AG04450 (cell line): ENCODE measurements at regions of chr7 and their contacts with region 1.

Region 1: GRCh38 chr7:32957326-32958045 is at the start of gene FKBP9:
- DNase-seq: no peak
- H3K4me3 ChIP-seq: peak within 1 kb of the TSS; percentile 88
- H3K27ac ChIP-seq: peak within 1 kb of the TSS; percentile 77
- H3K27me3 ChIP-seq: no peaks in the 10 kb centered on the region
- CTCF ChIP-seq: no peak
- polyA plus RNA-seq, gene FKBP9: 177 and 204 TPM in 2 replicates

Region 2: DNA sequence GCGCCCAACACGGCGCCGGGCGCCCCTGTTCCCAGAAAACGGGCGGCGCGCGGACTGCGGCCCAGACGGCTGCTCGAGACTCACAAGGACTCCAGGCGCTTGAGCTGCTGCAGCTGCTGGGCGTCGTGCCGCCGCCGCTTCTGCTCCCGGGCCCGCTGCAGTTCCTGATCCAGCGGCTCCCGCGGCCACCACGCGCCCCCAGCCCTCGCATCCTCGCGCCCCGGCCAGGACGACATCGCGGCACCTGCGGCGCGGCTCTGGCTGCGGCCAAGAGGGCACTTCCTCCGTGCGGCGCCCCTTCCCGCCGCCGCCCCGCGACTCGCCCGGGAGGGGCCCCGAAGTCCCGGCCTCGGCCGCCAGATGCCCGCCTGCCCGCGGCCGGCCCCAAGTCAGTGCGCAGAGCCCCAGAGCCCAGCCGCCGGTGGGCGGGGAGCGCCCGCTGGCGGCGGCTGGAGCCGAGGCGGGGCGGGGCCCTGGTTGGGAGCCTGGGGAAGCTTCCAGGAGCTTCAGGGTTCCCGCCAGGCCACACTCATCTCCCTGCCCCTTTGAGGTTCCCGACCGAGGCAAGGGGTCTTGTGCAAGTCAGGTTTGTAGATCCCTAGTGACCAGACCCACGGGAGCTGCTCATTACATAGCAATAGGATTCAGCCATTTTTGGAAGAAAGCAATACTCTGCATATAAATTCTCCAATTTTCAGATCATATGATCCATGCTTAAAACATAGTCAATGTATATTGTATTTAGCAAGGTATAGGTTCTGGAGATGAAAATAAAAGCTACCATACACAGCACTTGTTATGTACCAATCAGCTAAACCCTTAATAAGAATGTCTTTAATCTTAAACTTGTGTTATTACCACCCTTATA is 14.5 kb before region 1 on chr7:
- CTCF ChIA-PET with region 1: interaction called, 24 read pairs
- POLR2A ChIA-PET with region 1: interaction called, 16 read pairs
- DNase-seq: no peak
- H3K4me3 ChIP-seq: peak overlapping the region; percentile 81
- H3K27ac ChIP-seq: peak overlapping the region; percentile 61
- H3K27me3 ChIP-seq: no peaks in the 10 kb centered on the region
- CTCF ChIP-seq: peak; percentile 47

Region 3: GRCh38 chr7:33009734-33010133 is 52.2 kb after region 1 on chr7:
- CTCF ChIA-PET with region 1: interaction called, 10 read pairs
- POLR2A ChIA-PET with region 1: no interaction called
- DNase-seq: no peak
- H3K4me3 ChIP-seq: no peak overlapping the region
- H3K27ac ChIP-seq: no peak overlapping the region
- H3K27me3 ChIP-seq: no peaks in the 10 kb centered on the region
- CTCF ChIP-seq: no peak

Region 4: DNA sequence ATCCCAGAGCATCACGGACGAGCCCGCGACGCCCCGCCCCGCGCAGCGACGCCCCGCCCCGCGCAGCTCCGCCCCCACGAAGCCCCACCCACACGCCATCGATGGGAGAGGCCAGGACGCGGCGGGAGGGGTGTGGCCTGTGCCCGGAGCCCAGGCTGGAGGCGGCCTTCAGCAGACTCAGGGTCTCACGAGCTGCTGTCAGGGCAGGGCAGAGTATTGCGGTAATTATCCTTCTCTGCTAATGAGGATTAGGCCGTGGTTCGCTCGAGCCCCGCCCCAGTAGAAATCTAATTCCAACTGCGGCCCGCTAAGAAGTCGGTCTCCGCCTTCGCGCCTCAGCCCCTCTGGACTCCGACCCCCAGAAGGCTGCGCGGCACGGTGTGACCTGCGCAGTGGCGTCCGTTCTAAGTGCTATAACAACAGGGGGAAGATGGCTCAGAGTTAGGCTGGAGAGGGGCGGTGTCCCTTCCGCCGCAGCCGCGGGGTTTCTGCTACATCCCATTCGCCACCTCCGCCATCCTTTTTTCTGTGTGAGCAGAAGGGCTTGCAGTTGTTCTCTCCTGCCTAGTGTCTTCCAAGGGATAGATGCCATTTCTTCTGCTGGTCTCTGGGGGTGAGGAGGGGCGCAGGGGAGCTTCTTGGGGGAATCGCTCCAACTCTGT is 105.4 kb after region 1 on chr7:
- CTCF ChIA-PET with region 1: no interaction called
- POLR2A ChIA-PET with region 1: interaction called, 12 read pairs
- DNase-seq: peak; percentile 79
- H3K4me3 ChIP-seq: peak overlapping the region; percentile 86
- H3K27ac ChIP-seq: peak overlapping the region; percentile 90
- H3K27me3 ChIP-seq: no peaks in the 10 kb centered on the region
- CTCF ChIP-seq: no peak